CD8-positive, alpha-beta T cell (primary cell): ENCODE measurements at regions of chr15 and their contacts with region 1.

Region 1: DNA sequence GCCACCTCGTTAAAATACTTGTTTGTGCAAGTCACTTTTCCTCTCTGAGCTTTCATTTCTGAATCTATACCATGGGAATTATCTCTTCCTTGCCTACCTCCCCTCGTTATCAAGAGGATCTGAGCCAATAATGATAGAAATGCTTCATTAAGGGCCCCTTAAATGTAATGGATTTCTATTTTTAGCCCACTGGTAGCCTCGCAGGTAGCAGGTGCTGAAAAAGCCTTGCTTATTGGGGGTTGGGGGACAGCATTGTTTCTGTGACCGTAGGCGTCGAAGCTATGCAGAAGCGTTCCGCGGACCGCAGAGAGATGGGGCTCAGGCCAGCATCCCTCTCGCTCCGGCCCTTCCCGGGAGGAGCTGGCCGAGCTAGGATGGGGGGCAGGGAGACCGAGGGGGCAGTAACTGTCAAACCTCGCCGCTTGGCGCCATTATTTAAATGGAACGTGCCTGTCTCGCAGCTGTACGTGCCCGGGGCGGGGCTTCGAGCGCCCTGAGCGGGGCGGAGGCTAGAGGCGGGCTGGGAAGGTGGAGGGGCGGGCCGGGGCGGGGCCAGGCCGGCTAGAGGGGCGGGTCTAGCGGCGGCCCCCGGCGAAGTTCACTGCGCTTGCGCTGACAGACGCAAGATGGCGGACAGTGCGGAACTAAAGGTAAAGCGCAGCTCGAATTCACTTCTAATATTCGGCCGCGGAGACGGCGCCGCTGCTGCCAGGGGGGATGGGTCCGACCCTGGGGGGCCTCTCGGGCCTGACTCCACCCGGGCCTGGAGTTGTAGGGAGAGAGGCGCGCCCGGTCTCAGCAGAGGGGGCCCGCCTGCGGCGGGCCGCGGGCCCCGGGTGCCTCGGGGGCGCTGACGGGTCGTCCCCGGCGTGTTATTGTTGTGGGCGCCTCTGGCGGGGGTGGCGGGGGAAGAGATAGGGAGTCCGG is at the start of gene PIAS1:
- DNase-seq: peak; percentile 87 to 96 (median 93)
- ATAC-seq: peak; percentile 90
- H3K4me3 ChIP-seq: peak within 1 kb of the TSS; percentile 84 to 96
- H3K4me3 Mint-ChIP-seq: peak within 1 kb of the TSS; percentile 95
- H3K27ac ChIP-seq: peak within 1 kb of the TSS; percentile 79 to 85
- H3K27ac Mint-ChIP-seq: peak within 1 kb of the TSS; percentile 96
- H3K4me1 ChIP-seq: peaks cover 37% of the 10 kb centered on the region
- H3K4me1 Mint-ChIP-seq: peaks cover 47% of the 10 kb centered on the region
- H3K27me3 ChIP-seq: no peaks in the 10 kb centered on the region
- H3K27me3 Mint-ChIP-seq: peaks cover 2% of the 10 kb centered on the region
- CTCF ChIP-seq: no peak
- total RNA-seq, gene PIAS1: 73.9 to 78.5 TPM

Region 2: GRCh38 chr15:67521029-67521811 is 532.7 kb before region 1 on chr15 and contains the start of gene C15orf61:
- CTCF ChIA-PET with region 1: no interaction called
- POLR2A ChIA-PET with region 1: interaction called, 5 read pairs
- intact Hi-C with region 1: loop called in 1 of 2 experiments (anchors 1 kb)
- DNase-seq: peak; percentile 61 to 94 (median 84)
- ATAC-seq: peak; percentile 82
- H3K4me3 ChIP-seq: peak within 1 kb of the TSS; percentile 92 to 95
- H3K4me3 Mint-ChIP-seq: peak within 1 kb of the TSS; percentile 93
- H3K27ac ChIP-seq: peak within 1 kb of the TSS; percentile 72 to 92
- H3K27ac Mint-ChIP-seq: peak within 1 kb of the TSS; percentile 94
- H3K4me1 ChIP-seq: peaks cover 14% of the 10 kb centered on the region
- H3K4me1 Mint-ChIP-seq: peaks cover 36% of the 10 kb centered on the region
- H3K27me3 ChIP-seq: no peaks in the 10 kb centered on the region
- H3K27me3 Mint-ChIP-seq: no peaks in the 10 kb centered on the region
- CTCF ChIP-seq: no peak
- total RNA-seq, gene C15orf61: 11.2 to 14.4 TPM

Region 3: GRCh38 chr15:68091743-68092142 is 37.8 kb after region 1 on chr15:
- CTCF ChIA-PET with region 1: no interaction called
- POLR2A ChIA-PET with region 1: no interaction called
- intact Hi-C with region 1: loop called in 1 of 2 experiments (anchors 5 kb)
- DNase-seq: no peak
- ATAC-seq: no peak
- H3K4me3 ChIP-seq: no peak overlapping the region
- H3K4me3 Mint-ChIP-seq: no peak overlapping the region
- H3K27ac ChIP-seq: no peak overlapping the region
- H3K27ac Mint-ChIP-seq: no peak overlapping the region
- H3K4me1 ChIP-seq: no peaks in the 10 kb centered on the region
- H3K4me1 Mint-ChIP-seq: peaks cover 39% of the 10 kb centered on the region
- H3K27me3 ChIP-seq: no peaks in the 10 kb centered on the region
- H3K27me3 Mint-ChIP-seq: no peaks in the 10 kb centered on the region
- CTCF ChIP-seq: no peak

Region 4: GRCh38 chr15:68154923-68155559 is 101.1 kb after region 1 on chr15:
- CTCF ChIA-PET with region 1: interaction called, 3 read pairs
- POLR2A ChIA-PET with region 1: interaction called, 10 read pairs
- intact Hi-C with region 1: loop called in 1 of 2 experiments (anchors 2 kb)
- DNase-seq: peak in 4 of 9 experiments; percentile 12 to 46 (median 24)
- ATAC-seq: no peak
- H3K4me3 ChIP-seq: no peak overlapping the region
- H3K4me3 Mint-ChIP-seq: no peak overlapping the region
- H3K27ac ChIP-seq: no peak overlapping the region
- H3K27ac Mint-ChIP-seq: no peak overlapping the region
- H3K4me1 ChIP-seq: no peaks in the 10 kb centered on the region
- H3K4me1 Mint-ChIP-seq: peaks cover 3% of the 10 kb centered on the region
- H3K27me3 ChIP-seq: no peaks in the 10 kb centered on the region
- H3K27me3 Mint-ChIP-seq: no peaks in the 10 kb centered on the region
- CTCF ChIP-seq: peak; percentile 48

Region 5: DNA sequence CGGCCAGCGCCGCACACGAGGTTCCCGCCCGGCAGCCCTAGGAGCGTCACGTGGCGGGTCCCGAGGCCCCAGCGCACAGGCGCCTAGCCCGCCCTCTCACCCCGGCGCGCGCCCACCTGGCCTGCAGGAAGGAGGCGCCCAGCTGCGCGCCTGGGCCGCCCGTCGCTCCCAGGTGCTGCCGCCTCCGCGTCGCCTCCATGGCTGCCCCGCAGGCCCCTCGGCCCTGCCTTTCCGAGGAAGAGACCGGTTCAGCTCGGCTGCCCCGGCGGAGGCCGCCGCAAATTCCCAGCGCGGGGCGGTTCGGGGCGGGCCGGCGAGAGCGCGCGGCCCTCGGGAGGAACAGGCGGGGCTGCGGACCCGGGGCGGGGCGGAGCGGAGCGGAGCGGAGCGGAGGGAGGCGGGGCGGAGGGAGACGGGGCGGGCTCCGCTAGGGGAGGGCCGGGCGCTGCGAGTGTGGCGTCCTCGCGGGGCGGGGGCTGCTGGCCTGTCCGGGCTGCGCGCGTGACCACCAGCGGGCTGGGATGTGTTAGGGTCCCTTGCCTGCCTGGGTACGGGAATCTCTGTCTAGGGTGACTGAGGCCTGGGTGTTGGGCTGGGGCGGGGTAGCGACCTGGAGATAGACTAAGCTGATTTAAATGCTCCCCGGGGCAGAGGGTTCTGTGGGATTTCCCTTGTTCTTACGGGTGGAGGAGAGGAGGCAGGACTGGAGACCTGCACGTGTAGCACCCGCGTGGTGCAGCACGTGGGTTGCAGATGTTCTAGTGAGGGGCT is 175.6 kb after region 1 on chr15 and contains the start of gene CLN6:
- CTCF ChIA-PET with region 1: no interaction called
- POLR2A ChIA-PET with region 1: interaction called, 13 read pairs
- intact Hi-C with region 1: loop called (anchors 1 kb)
- DNase-seq: peak; percentile 55 to 91 (median 80)
- ATAC-seq: peak; percentile 87
- H3K4me3 ChIP-seq: peak within 1 kb of the TSS; percentile 86 to 90
- H3K4me3 Mint-ChIP-seq: peak within 1 kb of the TSS; percentile 93
- H3K27ac ChIP-seq: peak within 1 kb of the TSS; percentile 60 to 62
- H3K27ac Mint-ChIP-seq: peak within 1 kb of the TSS; percentile 88
- H3K4me1 ChIP-seq: peaks cover 23% of the 10 kb centered on the region
- H3K4me1 Mint-ChIP-seq: peaks cover 36% of the 10 kb centered on the region
- H3K27me3 ChIP-seq: no peaks in the 10 kb centered on the region
- H3K27me3 Mint-ChIP-seq: peaks cover 5% of the 10 kb centered on the region
- CTCF ChIP-seq: peak; percentile 27
- total RNA-seq, gene CLN6: 7.6 to 7.9 TPM

Region 6: DNA sequence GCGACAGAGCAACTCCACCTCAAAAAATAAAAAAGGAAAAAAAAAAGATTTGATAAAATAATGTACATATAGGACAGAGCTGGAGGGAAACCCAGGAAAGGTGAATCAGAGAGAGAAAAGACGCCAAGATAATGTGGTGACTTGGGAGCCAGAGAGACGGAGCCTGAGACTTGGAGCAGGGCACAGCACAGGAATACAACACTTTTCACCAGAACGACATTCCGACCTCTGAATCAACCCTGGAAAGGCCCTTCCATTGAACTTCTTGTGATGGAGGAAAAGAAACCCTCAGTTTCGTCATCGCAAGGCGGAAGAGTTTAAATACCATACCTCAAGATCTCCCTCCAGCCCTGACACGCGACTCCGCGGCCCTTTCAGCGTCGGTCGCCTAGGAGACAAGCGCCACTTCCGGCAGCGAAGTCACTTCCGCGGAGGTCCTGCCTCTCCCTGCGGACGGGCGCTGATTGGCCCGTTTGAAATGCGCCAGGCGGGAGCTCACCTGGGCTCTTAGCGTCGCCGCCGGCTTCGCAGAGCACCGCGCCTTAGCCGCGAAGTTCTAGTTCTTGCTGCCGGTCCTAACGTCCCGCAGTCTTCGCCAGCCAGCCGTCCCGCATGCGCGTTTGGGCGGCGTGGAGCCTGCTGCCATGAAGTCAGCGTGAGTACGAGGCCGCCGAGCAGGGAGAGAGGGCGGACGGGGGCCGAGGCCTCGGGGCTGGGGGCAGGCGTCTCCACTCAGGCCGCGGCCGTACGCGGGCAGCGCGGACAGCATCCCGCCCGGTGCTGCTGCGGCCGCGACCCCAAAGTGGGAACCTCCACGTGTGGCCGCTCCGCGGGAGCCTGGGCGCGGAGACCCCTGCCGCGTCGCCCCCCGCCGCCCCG is 1360.1 kb after region 1 on chr15 and contains the start of gene KIF23:
- CTCF ChIA-PET with region 1: no interaction called
- POLR2A ChIA-PET with region 1: no interaction called
- intact Hi-C with region 1: loop called in 1 of 2 experiments (anchors 10 kb)
- DNase-seq: peak; percentile 81 to 97 (median 94)
- ATAC-seq: peak; percentile 98
- H3K4me3 ChIP-seq: peak within 1 kb of the TSS; percentile 72 to 75
- H3K4me3 Mint-ChIP-seq: peak within 1 kb of the TSS; percentile 88
- H3K27ac ChIP-seq: no peak within 1 kb of the TSS
- H3K27ac Mint-ChIP-seq: no peak within 1 kb of the TSS
- H3K4me1 ChIP-seq: peaks cover 7% of the 10 kb centered on the region
- H3K4me1 Mint-ChIP-seq: peaks cover 15% of the 10 kb centered on the region
- H3K27me3 ChIP-seq: peaks cover 2 to 5% of the 10 kb centered on the region in 2 experiments
- H3K27me3 Mint-ChIP-seq: peaks cover 21% of the 10 kb centered on the region
- CTCF ChIP-seq: no peak
- total RNA-seq, gene KIF23: 0.81 to 0.95 TPM

Region 7: GRCh38 chr15:69452692-69453521 is 1398.9 kb after region 1 on chr15 and contains the start of gene RPLP1:
- CTCF ChIA-PET with region 1: no interaction called
- POLR2A ChIA-PET with region 1: no interaction called
- intact Hi-C with region 1: loop called in 1 of 2 experiments (anchors 10 kb)
- DNase-seq: peak; percentile 91 to 97 (median 95)
- ATAC-seq: peak; percentile 88
- H3K4me3 ChIP-seq: peak within 1 kb of the TSS; percentile 86 to 91
- H3K4me3 Mint-ChIP-seq: peak within 1 kb of the TSS; percentile 97
- H3K27ac ChIP-seq: peak within 1 kb of the TSS; percentile 75 to 92
- H3K27ac Mint-ChIP-seq: peak within 1 kb of the TSS; percentile 99
- H3K4me1 ChIP-seq: peaks cover 32% of the 10 kb centered on the region
- H3K4me1 Mint-ChIP-seq: peaks cover 47% of the 10 kb centered on the region
- H3K27me3 ChIP-seq: no peaks in the 10 kb centered on the region
- H3K27me3 Mint-ChIP-seq: no peaks in the 10 kb centered on the region
- CTCF ChIP-seq: no peak
- total RNA-seq, gene RPLP1: 2,675 to 2,824 TPM